ENCODE measurements at regions of chrX and their contacts with region 1.

Region 1: GRCh38 chrX:16826207-16826606 is 39.9 kb downstream of the TXLNG start:
- DNase-seq: no peak
- ATAC-seq: 0 out of 2 replicates have a peak, but pooled peaks have one; percentile 40
- H3K4me3 ChIP-seq: no peak overlapping the region
- H3K27ac ChIP-seq: peak overlapping the region; percentile 24; the same call in 1 of the 2 replicates
- H3K4me1 ChIP-seq: no peaks in the 10 kb centered on the region; a peak in 1 of 4 replicates
- H3K27me3 ChIP-seq: no peaks in the 10 kb centered on the region
- CTCF ChIP-seq: peak; percentile 36 to 52 (median 37); a peak in 4 of 6 replicates
- POLR2A ChIP-seq: no peak
- RAD21 ChIP-seq: peak; percentile 66

Region 2: DNA sequence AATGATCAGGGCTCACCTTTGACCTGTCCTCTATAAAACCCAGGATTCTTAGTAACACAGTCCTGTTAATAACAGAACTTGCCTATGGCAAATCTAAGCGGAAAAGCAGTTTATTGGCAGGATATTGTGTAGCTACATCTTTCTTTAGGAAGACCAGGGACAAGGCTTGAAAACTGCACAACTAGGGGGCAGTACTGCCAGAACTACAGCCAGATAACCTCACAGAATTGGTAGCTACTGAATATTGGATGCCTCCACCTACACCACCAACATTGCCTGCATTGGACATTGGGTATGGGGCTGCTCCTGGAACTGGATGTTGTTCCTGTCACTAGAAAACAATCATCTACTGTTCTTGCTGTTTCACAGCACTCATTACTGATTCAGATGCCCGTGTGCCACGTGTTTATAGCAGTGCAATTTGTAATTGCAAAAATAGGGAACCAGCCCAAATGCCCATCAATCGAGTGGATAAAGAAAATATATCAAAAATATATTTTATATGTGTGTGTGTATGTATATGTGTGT is 167.6 kb after region 1 on chrX:
- CTCF ChIA-PET with region 1: no interaction called
- POLR2A ChIA-PET with region 1: no interaction called
- RAD21 ChIA-PET with region 1: no interaction called
- intact Hi-C with region 1: no loop called
- DNase-seq: no peak
- ATAC-seq: peak; percentile 62; the same call in 1 of the 2 replicates
- H3K4me3 ChIP-seq: no peak overlapping the region
- H3K27ac ChIP-seq: no peak overlapping the region
- H3K4me1 ChIP-seq: no peaks in the 10 kb centered on the region
- H3K27me3 ChIP-seq: no peaks in the 10 kb centered on the region
- CTCF ChIP-seq: peak in 2 of 3 experiments; percentile 38 to 49; a peak in 4 of 6 replicates
- POLR2A ChIP-seq: no peak
- RAD21 ChIP-seq: 0 out of 2 replicates have a peak, but pooled peaks have one; percentile 3

Region 3: GRCh38 chrX:17046478-17047097 is 220.4 kb after region 1 on chrX:
- CTCF ChIA-PET with region 1: interaction called, 17 read pairs
- POLR2A ChIA-PET with region 1: no interaction called
- RAD21 ChIA-PET with region 1: no interaction called
- intact Hi-C with region 1: loop called (anchors 2 kb)
- DNase-seq: peak; percentile 44
- ATAC-seq: peak; percentile 90
- H3K4me3 ChIP-seq: no peak overlapping the region
- H3K27ac ChIP-seq: no peak overlapping the region
- H3K4me1 ChIP-seq: no peaks in the 10 kb centered on the region
- H3K27me3 ChIP-seq: no peaks in the 10 kb centered on the region
- CTCF ChIP-seq: peak; percentile 66 to 69 (median 68)
- POLR2A ChIP-seq: no peak
- RAD21 ChIP-seq: peak; percentile 80

Region 4: GRCh38 chrX:17082831-17083230 is 256.6 kb after region 1 on chrX:
- CTCF ChIA-PET with region 1: interaction called, 4 read pairs
- POLR2A ChIA-PET with region 1: no interaction called
- RAD21 ChIA-PET with region 1: no interaction called
- intact Hi-C with region 1: loop called (anchors 10 kb)
- DNase-seq: peak; percentile 0
- ATAC-seq: peak; percentile 67
- H3K4me3 ChIP-seq: no peak overlapping the region
- H3K27ac ChIP-seq: no peak overlapping the region
- H3K4me1 ChIP-seq: peaks cover 0 to 8% of the 10 kb centered on the region in 2 experiments; a peak in 2 of 4 replicates
- H3K27me3 ChIP-seq: no peaks in the 10 kb centered on the region
- CTCF ChIP-seq: peak in 2 of 3 experiments; percentile 20 to 27; a peak in 1 of 6 replicates
- POLR2A ChIP-seq: no peak
- RAD21 ChIP-seq: peak; percentile 55